Heart left ventricle (tissue), 16 donors: ENCODE measurements at regions of chr6 and their contacts with region 1.

Region 1: GRCh38 chr6:89970609-89971337 is 76.5 kb downstream of the GJA10 start:
- DNase-seq: peak in 3 of 5 donors; percentile 30 to 40 (median 39)
- ATAC-seq: peak; percentile 62 to 84 (median 78)
- H3K4me3 ChIP-seq: no peak overlapping the region
- H3K27ac ChIP-seq: no peak overlapping the region
- H3K4me1 ChIP-seq: peaks cover 0 to 28% (median 3%) of the 10 kb centered on the region in 12 donors
- H3K27me3 ChIP-seq: no peaks in the 10 kb centered on the region
- CTCF ChIP-seq: peak; percentile 43 to 73 (median 63)
- POLR2A ChIP-seq: no peak

Region 2: DNA sequence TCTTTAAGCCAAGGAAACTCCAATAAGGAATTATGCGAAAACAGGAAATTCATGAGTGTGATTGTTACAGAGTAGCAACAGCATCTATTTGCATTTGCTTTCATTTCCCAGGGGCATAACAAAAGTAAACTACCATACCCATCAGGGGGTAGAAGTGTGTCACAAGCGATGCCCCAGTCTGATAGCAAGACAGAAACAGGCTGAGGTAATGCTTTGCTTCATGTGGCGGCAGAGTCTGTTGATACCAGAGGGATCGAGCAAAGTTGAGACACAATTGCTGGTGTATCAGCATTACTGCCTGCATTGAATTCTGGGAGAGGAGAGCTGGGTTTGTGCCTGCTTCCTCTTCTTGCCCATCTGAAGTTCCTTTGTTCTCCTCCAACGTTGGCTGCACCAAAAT is 281.0 kb before region 1 on chr6:
- intact Hi-C with region 1: no loop called
- DNase-seq: peak in 1 of 5 donors; percentile 34
- ATAC-seq: peak in 3 of 4 donors; percentile 49 to 78 (median 69)
- H3K4me3 ChIP-seq: peak overlapping the region in 2 of 12 donors; percentile 27 to 36
- H3K27ac ChIP-seq: peak overlapping the region in 8 of 12 donors; percentile 1 to 75 (median 44)
- H3K4me1 ChIP-seq: peaks cover 0 to 20% (median 8%) of the 10 kb centered on the region in 12 donors
- H3K27me3 ChIP-seq: no peaks in the 10 kb centered on the region
- CTCF ChIP-seq: no peak
- POLR2A ChIP-seq: no peak

Region 3: GRCh38 chr6:90098001-90098531 is 127.3 kb after region 1 on chr6:
- intact Hi-C with region 1: loop called in 4 of 10 experiments (anchors 10 kb)
- DNase-seq: peak in 4 of 5 donors; percentile 29 to 57 (median 50)
- ATAC-seq: peak; percentile 85 to 94 (median 88)
- H3K4me3 ChIP-seq: no peak overlapping the region
- H3K27ac ChIP-seq: peak overlapping the region in 11 of 12 donors; percentile 44 to 84 (median 68)
- H3K4me1 ChIP-seq: peaks cover 0 to 43% (median 22%) of the 10 kb centered on the region in 12 donors
- H3K27me3 ChIP-seq: no peaks in the 10 kb centered on the region
- CTCF ChIP-seq: peak in 11 of 12 donors; percentile 3 to 66 (median 42)
- POLR2A ChIP-seq: no peak

Region 4: GRCh38 chr6:90216072-90216977 is 245.6 kb after region 1 on chr6:
- intact Hi-C with region 1: loop called in 2 of 10 experiments (anchors 5 to 10 kb)
- DNase-seq: peak in 1 of 5 donors; percentile 16
- ATAC-seq: no peak
- H3K4me3 ChIP-seq: no peak overlapping the region
- H3K27ac ChIP-seq: peak overlapping the region in 7 of 12 donors; percentile 12 to 88 (median 36)
- H3K4me1 ChIP-seq: peaks cover 0 to 56% (median 37%) of the 10 kb centered on the region in 12 donors
- H3K27me3 ChIP-seq: no peaks in the 10 kb centered on the region
- CTCF ChIP-seq: no peak
- POLR2A ChIP-seq: no peak

Region 5: GRCh38 chr6:90393232-90393884 is 422.6 kb after region 1 on chr6:
- intact Hi-C with region 1: loop called (anchors 1 to 5 kb)
- DNase-seq: peak in 3 of 5 donors; percentile 43 to 53 (median 51)
- ATAC-seq: peak; percentile 62 to 77 (median 72)
- H3K4me3 ChIP-seq: no peak overlapping the region
- H3K27ac ChIP-seq: no peak overlapping the region
- H3K4me1 ChIP-seq: peaks cover 0 to 11% (median 0%) of the 10 kb centered on the region in 12 donors
- H3K27me3 ChIP-seq: no peaks in the 10 kb centered on the region
- CTCF ChIP-seq: peak; percentile 67 to 84 (median 76)
- POLR2A ChIP-seq: no peak